Activated CD8-positive, alpha-beta T cell treated with anti-CD3 and anti-CD28 coated beads for 36 hours (primary cell): ENCODE measurements at regions of chr22 and their contacts with region 1.

Region 1: GRCh38 chr22:31211862-31212730 is at the start of gene LIMK2:
- DNase-seq: peak; percentile 99
- ATAC-seq: peak; percentile 99
- H3K4me3 Mint-ChIP-seq: peak within 1 kb of the TSS; percentile 82
- H3K27ac Mint-ChIP-seq: peak within 1 kb of the TSS; percentile 82
- H3K4me1 Mint-ChIP-seq: peaks cover 34% of the 10 kb centered on the region
- H3K27me3 Mint-ChIP-seq: no peaks in the 10 kb centered on the region
- CTCF ChIP-seq: peak; percentile 83
- total RNA-seq, gene LIMK2: 23.2 to 25.5 TPM

Region 2: DNA sequence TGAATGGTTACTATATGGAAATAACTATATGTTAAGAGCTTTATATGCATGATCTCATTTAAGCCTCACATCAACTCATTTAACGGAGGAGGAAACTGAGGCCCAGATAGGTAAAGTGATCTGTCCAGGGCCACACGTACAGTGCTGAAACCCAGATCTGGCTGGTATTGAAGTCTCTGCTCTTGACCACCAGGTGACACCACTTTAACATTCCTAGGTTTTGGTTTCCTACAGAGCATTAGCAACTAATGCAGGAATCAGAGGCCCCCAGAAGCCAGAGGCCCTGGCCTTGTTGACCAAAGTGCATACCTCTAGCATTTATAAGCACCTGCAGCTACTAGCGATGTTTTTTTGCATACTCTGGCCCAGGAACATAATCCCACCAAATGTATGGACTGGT is 12.9 kb before region 1 on chr22:
- CTCF ChIA-PET with region 1: interaction called, 20 read pairs
- POLR2A ChIA-PET with region 1: interaction called, 4 read pairs
- intact Hi-C with region 1: no loop called
- DNase-seq: no peak
- ATAC-seq: no peak
- H3K4me3 Mint-ChIP-seq: no peak overlapping the region
- H3K27ac Mint-ChIP-seq: no peak overlapping the region
- H3K4me1 Mint-ChIP-seq: no peaks in the 10 kb centered on the region
- H3K27me3 Mint-ChIP-seq: no peaks in the 10 kb centered on the region
- CTCF ChIP-seq: no peak

Region 3: DNA sequence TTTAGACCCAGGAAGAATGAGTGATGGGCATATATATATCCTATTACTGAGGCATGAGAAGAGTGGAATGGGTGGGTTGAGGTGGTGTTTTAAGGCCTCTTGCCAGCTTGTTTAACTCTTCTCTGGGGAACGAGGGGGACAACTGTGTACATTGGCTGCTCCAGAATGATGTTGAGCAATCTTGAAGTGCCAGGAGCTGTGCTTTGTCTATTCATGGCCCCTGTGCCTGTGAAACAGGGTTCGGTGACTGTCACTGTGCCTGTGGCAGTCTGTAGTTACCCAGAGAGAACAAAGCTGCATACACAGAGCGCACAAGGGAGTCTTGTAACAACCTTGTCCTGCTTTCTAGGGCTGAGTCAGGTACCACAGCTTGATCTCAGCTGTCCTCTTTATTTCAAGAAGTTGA is 11.7 kb after region 1 on chr22:
- CTCF ChIA-PET with region 1: interaction called, 19 read pairs
- POLR2A ChIA-PET with region 1: interaction called, 8 read pairs
- intact Hi-C with region 1: no loop called
- DNase-seq: no peak
- ATAC-seq: no peak
- H3K4me3 Mint-ChIP-seq: no peak overlapping the region
- H3K27ac Mint-ChIP-seq: no peak overlapping the region
- H3K4me1 Mint-ChIP-seq: peaks cover 17% of the 10 kb centered on the region
- H3K27me3 Mint-ChIP-seq: no peaks in the 10 kb centered on the region
- CTCF ChIP-seq: no peak